Left ventricle myocardium superior (tissue), 1 donor: ENCODE measurements at regions of chr6 and their contacts with region 1.

Region 1: GRCh38 chr6:16761471-16762267 is 409 bp upstream of the ATXN1 start:
- DNase-seq: peak; percentile 93
- ATAC-seq: peak; percentile 65

Region 2: GRCh38 chr6:15854826-15855710 is 906.6 kb before region 1 on chr6:
- intact Hi-C with region 1: no loop called
- DNase-seq: no peak
- ATAC-seq: no peak

Region 3: DNA sequence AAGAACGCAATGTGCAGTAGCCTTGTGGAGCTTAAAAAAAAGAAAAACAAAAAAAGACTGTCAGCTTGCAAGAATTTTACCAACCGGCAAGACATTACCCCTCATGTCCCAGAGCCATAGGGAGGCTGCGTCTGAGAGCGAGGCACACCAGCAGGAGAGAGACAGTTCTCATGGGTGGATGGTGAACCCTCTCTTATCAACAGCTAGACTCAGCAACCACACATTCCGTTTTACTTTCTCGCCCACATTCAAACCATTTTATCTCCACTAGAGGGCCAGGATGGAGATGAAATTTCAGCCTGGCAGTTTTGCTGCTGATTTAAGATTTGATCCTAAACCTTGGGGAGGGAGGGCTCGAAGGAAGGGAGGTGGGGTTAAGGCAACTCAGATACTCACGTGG is 247.4 kb before region 1 on chr6:
- intact Hi-C with region 1: loop called (anchors 5 kb)
- DNase-seq: no peak
- ATAC-seq: peak; percentile 24